ENCODE measurements at regions of chr5 and their contacts with region 1.

Region 1: DNA sequence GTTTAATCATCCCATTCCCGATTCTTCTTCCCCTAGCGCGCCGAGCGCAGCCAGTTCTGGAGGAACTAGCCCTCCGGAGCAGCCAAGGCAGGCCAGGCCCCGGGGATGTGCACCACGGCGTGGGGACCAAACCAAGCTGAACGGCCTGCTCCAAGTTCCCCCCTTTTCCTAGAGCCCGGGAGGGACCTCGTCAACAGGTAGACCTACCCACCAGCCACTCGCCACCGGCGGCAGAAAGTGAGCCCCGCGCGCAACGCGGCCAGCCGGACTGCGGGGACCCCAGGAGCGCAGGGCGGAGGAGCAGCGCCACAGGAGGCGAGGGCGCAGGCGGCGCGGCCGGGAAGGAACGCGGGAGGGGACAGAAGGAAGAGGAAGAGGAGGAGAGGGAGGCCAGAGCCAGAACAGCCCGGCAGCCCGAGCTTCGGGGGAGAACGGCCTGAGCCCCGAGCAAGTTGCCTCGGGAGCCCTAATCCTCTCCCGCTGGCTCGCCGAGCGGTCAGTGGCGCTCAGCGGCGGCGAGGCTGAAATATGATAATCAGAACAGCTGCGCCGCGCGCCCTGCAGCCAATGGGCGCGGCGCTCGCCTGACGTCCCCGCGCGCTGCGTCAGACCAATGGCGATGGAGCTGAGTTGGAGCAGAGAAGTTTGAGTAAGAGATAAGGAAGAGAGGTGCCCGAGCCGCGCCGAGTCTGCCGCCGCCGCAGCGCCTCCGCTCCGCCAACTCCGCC is at the start of gene ISL1:
- DNase-seq: peak; percentile 90
- H3K4me3 ChIP-seq: peak within 1 kb of the TSS; percentile 46 to 69 (median 55)
- H3K27ac ChIP-seq: peak within 1 kb of the TSS; percentile 40
- H3K4me1 ChIP-seq: peaks cover 18% of the 10 kb centered on the region
- H3K27me3 ChIP-seq: peaks cover 47 to 86% of the 10 kb centered on the region in 2 experiments
- CTCF ChIP-seq: no peak
- POLR2A ChIP-seq: peak; percentile 55
- total RNA-seq, gene ISL1: 0.53 and 1.1 TPM in 2 replicates

Region 2: GRCh38 chr5:51479840-51480239 is 96.9 kb after region 1 on chr5:
- CTCF ChIA-PET with region 1: no interaction called
- POLR2A ChIA-PET with region 1: no interaction called
- dilution Hi-C with region 1: no loop called
- intact Hi-C with region 1: no loop called
- DNase-seq: no peak
- H3K4me3 ChIP-seq: no peak overlapping the region
- H3K27ac ChIP-seq: no peak overlapping the region
- H3K4me1 ChIP-seq: no peaks in the 10 kb centered on the region
- H3K27me3 ChIP-seq: no peaks in the 10 kb centered on the region
- CTCF ChIP-seq: no peak
- POLR2A ChIP-seq: no peak

Region 3: DNA sequence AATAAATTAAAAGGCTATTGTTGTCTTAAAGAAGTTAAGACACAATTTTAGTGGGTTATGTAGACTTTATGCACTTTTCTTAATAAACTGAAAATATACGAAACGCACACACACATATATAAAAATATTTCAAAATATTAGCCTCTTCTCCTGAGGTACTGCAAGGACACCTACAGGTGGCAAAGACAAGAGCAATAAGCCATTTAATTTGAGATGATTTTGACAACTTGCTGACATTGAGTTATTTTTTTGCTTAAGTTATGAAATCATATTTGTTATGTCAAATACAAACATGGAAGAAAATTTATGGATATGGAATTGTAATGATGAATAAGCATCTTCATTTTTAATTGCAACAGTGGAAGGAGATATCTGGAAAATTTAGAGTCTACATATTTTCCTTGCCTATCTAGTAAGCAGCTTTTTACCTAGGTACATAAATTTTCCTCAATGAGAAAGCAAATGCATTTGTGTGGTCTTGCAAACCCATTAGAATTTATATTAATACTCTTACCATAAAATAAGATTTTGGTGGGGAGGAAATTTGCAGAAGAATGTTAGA is 301.9 kb after region 1 on chr5:
- CTCF ChIA-PET with region 1: interaction called, 4 read pairs
- POLR2A ChIA-PET with region 1: no interaction called
- dilution Hi-C with region 1: no loop called
- intact Hi-C with region 1: loop called (anchors 1 kb)
- DNase-seq: peak; percentile 8
- H3K4me3 ChIP-seq: no peak overlapping the region
- H3K27ac ChIP-seq: no peak overlapping the region
- H3K4me1 ChIP-seq: no peaks in the 10 kb centered on the region
- H3K27me3 ChIP-seq: no peaks in the 10 kb centered on the region
- CTCF ChIP-seq: peak in 1 of 2 donors; percentile 18
- POLR2A ChIP-seq: no peak

Region 4: GRCh38 chr5:51846015-51846414 is 463.1 kb after region 1 on chr5:
- CTCF ChIA-PET with region 1: interaction called, 26 read pairs
- POLR2A ChIA-PET with region 1: no interaction called
- dilution Hi-C with region 1: no loop called
- intact Hi-C with region 1: loop called (anchors 2 kb)
- DNase-seq: no peak
- H3K4me3 ChIP-seq: no peak overlapping the region
- H3K27ac ChIP-seq: no peak overlapping the region
- H3K4me1 ChIP-seq: no peaks in the 10 kb centered on the region
- H3K27me3 ChIP-seq: no peaks in the 10 kb centered on the region
- CTCF ChIP-seq: no peak
- POLR2A ChIP-seq: no peak

Region 5: DNA sequence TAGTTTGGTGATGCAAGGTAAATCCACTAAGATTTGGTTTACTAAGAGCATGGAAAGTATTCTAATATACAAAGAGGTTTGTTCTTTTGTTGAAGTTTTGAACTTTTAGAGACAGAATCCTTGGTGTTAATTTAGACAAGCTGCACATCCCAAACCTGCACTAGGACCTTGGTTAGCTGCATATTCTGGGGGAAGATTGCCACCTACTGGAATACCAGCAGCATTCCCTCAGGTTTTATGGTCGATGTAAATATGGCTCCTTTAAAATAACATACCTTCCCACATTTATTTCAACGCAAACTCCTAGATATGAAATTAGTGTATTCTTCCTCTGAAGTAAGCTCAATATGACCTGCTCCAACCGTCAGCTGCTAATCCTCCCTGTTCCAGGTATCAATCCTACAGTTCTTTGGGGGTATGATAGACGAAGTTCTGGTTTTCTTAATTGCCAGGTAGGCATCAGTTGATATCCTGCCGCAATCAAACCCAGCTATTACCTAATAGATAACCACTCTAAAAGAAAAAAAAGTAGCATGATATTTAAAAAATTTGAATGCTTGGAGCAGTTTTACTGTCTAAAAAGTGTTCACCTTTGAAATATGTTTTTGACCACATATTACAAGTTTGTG is 624.4 kb after region 1 on chr5:
- CTCF ChIA-PET with region 1: interaction called, 30 read pairs
- POLR2A ChIA-PET with region 1: no interaction called
- dilution Hi-C with region 1: no loop called
- intact Hi-C with region 1: loop called (anchors 1 kb)
- DNase-seq: peak; percentile 48
- H3K4me3 ChIP-seq: no peak overlapping the region
- H3K27ac ChIP-seq: no peak overlapping the region
- H3K4me1 ChIP-seq: no peaks in the 10 kb centered on the region
- H3K27me3 ChIP-seq: no peaks in the 10 kb centered on the region
- CTCF ChIP-seq: peak; percentile 51 to 67
- POLR2A ChIP-seq: no peak

Region 6: GRCh38 chr5:52262844-52263243 is 879.9 kb after region 1 on chr5:
- CTCF ChIA-PET with region 1: no interaction called
- POLR2A ChIA-PET with region 1: no interaction called
- dilution Hi-C with region 1: no loop called
- intact Hi-C with region 1: no loop called
- DNase-seq: no peak
- H3K4me3 ChIP-seq: no peak overlapping the region
- H3K27ac ChIP-seq: no peak overlapping the region
- H3K4me1 ChIP-seq: no peaks in the 10 kb centered on the region
- H3K27me3 ChIP-seq: no peaks in the 10 kb centered on the region
- CTCF ChIP-seq: no peak
- POLR2A ChIP-seq: no peak

Region 7: GRCh38 chr5:52657247-52657645 is 1274.3 kb after region 1 on chr5:
- CTCF ChIA-PET with region 1: no interaction called
- POLR2A ChIA-PET with region 1: no interaction called
- dilution Hi-C with region 1: no loop called
- intact Hi-C with region 1: loop called (anchors 5 kb)
- DNase-seq: peak; percentile 58
- H3K4me3 ChIP-seq: no peak overlapping the region
- H3K27ac ChIP-seq: no peak overlapping the region
- H3K4me1 ChIP-seq: no peaks in the 10 kb centered on the region
- H3K27me3 ChIP-seq: peaks cover 9 to 19% of the 10 kb centered on the region in 2 experiments
- CTCF ChIP-seq: peak; percentile 19 to 21
- POLR2A ChIP-seq: no peak